ENCODE measurements at regions of chr9 and their contacts with region 1.

Region 1: GRCh38 chr9:126398403-126399058 is 71.9 kb downstream of the MVB12B start:
- DNase-seq: peak; percentile 39 to 85 (median 68)
- ATAC-seq: no peak
- H3K4me3 ChIP-seq: no peak overlapping the region
- H3K4me3 Mint-ChIP-seq: peak overlapping the region; percentile 48
- H3K27ac ChIP-seq: no peak overlapping the region
- H3K27ac Mint-ChIP-seq: peak overlapping the region; percentile 85
- H3K4me1 ChIP-seq: peaks cover 41% of the 10 kb centered on the region
- H3K4me1 Mint-ChIP-seq: peaks cover 58% of the 10 kb centered on the region
- H3K27me3 ChIP-seq: no peaks in the 10 kb centered on the region
- H3K27me3 Mint-ChIP-seq: no peaks in the 10 kb centered on the region
- CTCF ChIP-seq: peak; percentile 96

Region 2: GRCh38 chr9:125407974-125408900 is 990.3 kb before region 1 on chr9:
- CTCF ChIA-PET with region 1: no interaction called
- POLR2A ChIA-PET with region 1: no interaction called
- intact Hi-C with region 1: loop called in 1 of 2 experiments (anchors 5 kb)
- DNase-seq: peak; percentile 50 to 85 (median 72)
- ATAC-seq: peak; percentile 85
- H3K4me3 ChIP-seq: peak overlapping the region; percentile 31
- H3K4me3 Mint-ChIP-seq: peak overlapping the region; percentile 80
- H3K27ac ChIP-seq: no peak overlapping the region
- H3K27ac Mint-ChIP-seq: no peak overlapping the region
- H3K4me1 ChIP-seq: peaks cover 14% of the 10 kb centered on the region
- H3K4me1 Mint-ChIP-seq: peaks cover 8% of the 10 kb centered on the region
- H3K27me3 ChIP-seq: peaks cover 7 to 8% of the 10 kb centered on the region in 2 experiments
- H3K27me3 Mint-ChIP-seq: peaks cover 44% of the 10 kb centered on the region
- CTCF ChIP-seq: peak; percentile 90

Region 3: DNA sequence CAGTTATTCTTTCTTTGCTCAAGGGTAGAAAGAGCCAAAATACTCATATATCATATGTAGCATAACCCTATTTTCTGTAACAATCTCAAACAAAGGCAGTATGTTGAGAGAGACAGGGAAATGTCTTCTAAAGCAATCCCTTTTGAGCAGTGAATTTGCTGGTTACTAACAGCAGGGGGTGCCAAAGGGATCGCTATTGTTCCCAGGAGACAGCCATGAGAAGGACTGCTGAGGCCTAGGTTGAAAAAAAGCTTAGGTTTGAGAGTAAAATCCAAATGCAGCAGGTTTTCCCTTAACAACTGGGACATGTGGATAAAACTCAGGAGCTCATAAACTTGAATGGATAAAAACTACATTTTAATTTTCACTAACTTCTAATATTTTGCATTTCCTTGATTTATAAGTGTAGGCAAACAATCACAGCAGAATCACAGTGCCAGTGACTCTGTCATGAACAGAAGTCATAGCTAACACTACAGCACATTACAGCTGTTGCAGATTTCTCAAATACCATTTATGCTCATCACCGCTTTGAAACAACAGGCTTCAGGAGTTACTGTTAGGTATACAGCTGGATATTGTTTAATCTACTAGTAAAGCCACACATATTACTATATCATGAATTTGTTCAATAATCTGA is 840.0 kb before region 1 on chr9:
- CTCF ChIA-PET with region 1: no interaction called
- POLR2A ChIA-PET with region 1: no interaction called
- intact Hi-C with region 1: loop called in 1 of 2 experiments (anchors 5 kb)
- DNase-seq: peak in 13 of 14 experiments; percentile 10 to 76 (median 30)
- ATAC-seq: peak; percentile 70
- H3K4me3 ChIP-seq: no peak overlapping the region
- H3K4me3 Mint-ChIP-seq: no peak overlapping the region
- H3K27ac ChIP-seq: no peak overlapping the region
- H3K27ac Mint-ChIP-seq: no peak overlapping the region
- H3K4me1 ChIP-seq: no peaks in the 10 kb centered on the region
- H3K4me1 Mint-ChIP-seq: peaks cover 11% of the 10 kb centered on the region
- H3K27me3 ChIP-seq: no peaks in the 10 kb centered on the region
- H3K27me3 Mint-ChIP-seq: no peaks in the 10 kb centered on the region
- CTCF ChIP-seq: peak; percentile 68

Region 4: GRCh38 chr9:126301985-126302603 is 96.4 kb before region 1 on chr9:
- CTCF ChIA-PET with region 1: interaction called, 11 read pairs
- POLR2A ChIA-PET with region 1: interaction called, 3 read pairs
- intact Hi-C with region 1: loop called (anchors 1 kb)
- DNase-seq: peak; percentile 30 to 78 (median 42)
- ATAC-seq: peak; percentile 97
- H3K4me3 ChIP-seq: no peak overlapping the region
- H3K4me3 Mint-ChIP-seq: no peak overlapping the region
- H3K27ac ChIP-seq: no peak overlapping the region
- H3K27ac Mint-ChIP-seq: no peak overlapping the region
- H3K4me1 ChIP-seq: no peaks in the 10 kb centered on the region
- H3K4me1 Mint-ChIP-seq: peaks cover 5% of the 10 kb centered on the region
- H3K27me3 ChIP-seq: no peaks in the 10 kb centered on the region
- H3K27me3 Mint-ChIP-seq: no peaks in the 10 kb centered on the region
- CTCF ChIP-seq: peak; percentile 62

Region 5: DNA sequence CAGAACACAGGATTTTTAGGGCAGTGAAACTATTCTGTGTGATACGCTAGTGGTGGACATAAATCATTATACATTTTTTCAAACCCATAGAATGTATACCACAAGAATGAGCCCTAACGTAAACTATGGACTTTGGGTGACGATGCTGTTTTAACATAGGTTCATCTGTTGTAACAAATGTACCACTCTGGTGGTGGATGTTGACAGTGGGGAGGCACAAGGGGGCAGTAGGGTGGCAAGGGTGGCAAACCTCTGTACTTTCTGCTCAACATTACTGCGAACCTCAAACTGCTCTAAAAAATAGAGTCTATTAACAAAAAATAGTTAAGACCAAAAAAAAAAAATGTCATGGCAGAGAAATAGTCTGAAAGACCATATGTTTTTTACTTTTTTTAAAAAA is 81.0 kb before region 1 on chr9:
- CTCF ChIA-PET with region 1: interaction called, 6 read pairs
- POLR2A ChIA-PET with region 1: no interaction called
- intact Hi-C with region 1: loop called (anchors 1 to 5 kb)
- DNase-seq: peak; percentile 11 to 69 (median 44)
- ATAC-seq: peak; percentile 88
- H3K4me3 ChIP-seq: no peak overlapping the region
- H3K4me3 Mint-ChIP-seq: no peak overlapping the region
- H3K27ac ChIP-seq: no peak overlapping the region
- H3K27ac Mint-ChIP-seq: no peak overlapping the region
- H3K4me1 ChIP-seq: peaks cover 4% of the 10 kb centered on the region
- H3K4me1 Mint-ChIP-seq: peaks cover 16% of the 10 kb centered on the region
- H3K27me3 ChIP-seq: no peaks in the 10 kb centered on the region
- H3K27me3 Mint-ChIP-seq: no peaks in the 10 kb centered on the region
- CTCF ChIP-seq: peak; percentile 66

Region 6: DNA sequence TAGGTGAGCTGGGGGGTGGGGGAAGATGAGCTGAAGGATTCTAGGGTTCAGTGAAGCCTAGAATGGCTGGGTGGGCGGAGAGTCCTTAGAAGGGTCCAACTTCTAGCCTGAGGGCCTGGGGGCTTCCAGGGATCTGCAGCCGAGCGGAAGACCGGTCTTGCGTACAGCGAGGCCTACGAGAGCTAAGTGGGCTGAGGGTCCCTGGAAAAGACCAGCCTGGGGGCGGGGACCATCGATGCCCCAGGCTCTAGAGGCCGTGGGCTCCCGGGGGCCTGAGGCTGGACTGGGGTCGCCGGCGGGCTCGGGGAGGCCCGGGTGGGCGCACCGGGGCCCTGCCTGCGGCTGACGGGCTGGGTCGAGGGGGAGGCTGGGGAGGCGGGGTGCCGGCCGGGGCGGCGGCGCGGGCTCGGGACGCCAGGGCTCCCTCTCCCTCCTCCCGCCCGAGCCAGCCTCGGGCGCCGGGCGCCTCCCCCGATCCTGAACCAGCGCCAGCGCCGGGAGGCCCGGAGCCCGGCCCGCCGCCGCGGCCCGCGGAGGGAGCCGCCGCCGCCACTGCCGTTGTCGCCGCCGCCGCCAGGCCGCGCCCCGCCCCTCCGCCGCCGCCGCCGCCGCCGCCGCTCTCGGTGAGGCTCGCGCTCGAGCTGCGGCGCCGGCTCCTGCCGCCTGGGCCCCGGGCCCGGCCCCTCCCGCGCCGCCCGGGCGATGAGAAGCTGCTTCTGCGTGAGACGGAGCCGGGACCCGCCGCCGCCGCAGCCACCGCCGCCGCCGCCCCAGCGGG is 72.1 kb before region 1 on chr9 and contains the start of gene MVB12B:
- CTCF ChIA-PET with region 1: no interaction called
- POLR2A ChIA-PET with region 1: interaction called, 4 read pairs
- intact Hi-C with region 1: loop called (anchors 2 kb)
- DNase-seq: peak; percentile 17 to 86 (median 52)
- ATAC-seq: peak; percentile 82
- H3K4me3 ChIP-seq: peak within 1 kb of the TSS; percentile 62
- H3K4me3 Mint-ChIP-seq: peak within 1 kb of the TSS; percentile 92
- H3K27ac ChIP-seq: no peak within 1 kb of the TSS
- H3K27ac Mint-ChIP-seq: peak within 1 kb of the TSS; percentile 87
- H3K4me1 ChIP-seq: peaks cover 37% of the 10 kb centered on the region
- H3K4me1 Mint-ChIP-seq: peaks cover 47% of the 10 kb centered on the region
- H3K27me3 ChIP-seq: no peaks in the 10 kb centered on the region
- H3K27me3 Mint-ChIP-seq: no peaks in the 10 kb centered on the region
- CTCF ChIP-seq: no peak
- total RNA-seq, gene MVB12B: 14.3 to 15.3 TPM

Region 7: GRCh38 chr9:126440940-126441339 is 42.4 kb after region 1 on chr9:
- CTCF ChIA-PET with region 1: no interaction called
- POLR2A ChIA-PET with region 1: no interaction called
- intact Hi-C with region 1: no loop called
- DNase-seq: no peak
- ATAC-seq: no peak
- H3K4me3 ChIP-seq: no peak overlapping the region
- H3K4me3 Mint-ChIP-seq: no peak overlapping the region
- H3K27ac ChIP-seq: no peak overlapping the region
- H3K27ac Mint-ChIP-seq: no peak overlapping the region
- H3K4me1 ChIP-seq: no peaks in the 10 kb centered on the region
- H3K4me1 Mint-ChIP-seq: peaks cover 16% of the 10 kb centered on the region
- H3K27me3 ChIP-seq: no peaks in the 10 kb centered on the region
- H3K27me3 Mint-ChIP-seq: no peaks in the 10 kb centered on the region
- CTCF ChIP-seq: no peak

Region 8: GRCh38 chr9:126471084-126471624 is 72.6 kb after region 1 on chr9:
- CTCF ChIA-PET with region 1: interaction called, 3 read pairs
- POLR2A ChIA-PET with region 1: interaction called, 19 read pairs
- intact Hi-C with region 1: loop called in 1 of 2 experiments (anchors 5 kb)
- DNase-seq: peak; percentile 53 to 92 (median 62)
- ATAC-seq: peak; percentile 73
- H3K4me3 ChIP-seq: peak overlapping the region; percentile 31
- H3K4me3 Mint-ChIP-seq: peak overlapping the region; percentile 81
- H3K27ac ChIP-seq: peak overlapping the region; percentile 42 to 56
- H3K27ac Mint-ChIP-seq: peak overlapping the region; percentile 95
- H3K4me1 ChIP-seq: peaks cover 82% of the 10 kb centered on the region
- H3K4me1 Mint-ChIP-seq: peaks cover 80% of the 10 kb centered on the region
- H3K27me3 ChIP-seq: no peaks in the 10 kb centered on the region
- H3K27me3 Mint-ChIP-seq: no peaks in the 10 kb centered on the region
- CTCF ChIP-seq: no peak

Region 9: DNA sequence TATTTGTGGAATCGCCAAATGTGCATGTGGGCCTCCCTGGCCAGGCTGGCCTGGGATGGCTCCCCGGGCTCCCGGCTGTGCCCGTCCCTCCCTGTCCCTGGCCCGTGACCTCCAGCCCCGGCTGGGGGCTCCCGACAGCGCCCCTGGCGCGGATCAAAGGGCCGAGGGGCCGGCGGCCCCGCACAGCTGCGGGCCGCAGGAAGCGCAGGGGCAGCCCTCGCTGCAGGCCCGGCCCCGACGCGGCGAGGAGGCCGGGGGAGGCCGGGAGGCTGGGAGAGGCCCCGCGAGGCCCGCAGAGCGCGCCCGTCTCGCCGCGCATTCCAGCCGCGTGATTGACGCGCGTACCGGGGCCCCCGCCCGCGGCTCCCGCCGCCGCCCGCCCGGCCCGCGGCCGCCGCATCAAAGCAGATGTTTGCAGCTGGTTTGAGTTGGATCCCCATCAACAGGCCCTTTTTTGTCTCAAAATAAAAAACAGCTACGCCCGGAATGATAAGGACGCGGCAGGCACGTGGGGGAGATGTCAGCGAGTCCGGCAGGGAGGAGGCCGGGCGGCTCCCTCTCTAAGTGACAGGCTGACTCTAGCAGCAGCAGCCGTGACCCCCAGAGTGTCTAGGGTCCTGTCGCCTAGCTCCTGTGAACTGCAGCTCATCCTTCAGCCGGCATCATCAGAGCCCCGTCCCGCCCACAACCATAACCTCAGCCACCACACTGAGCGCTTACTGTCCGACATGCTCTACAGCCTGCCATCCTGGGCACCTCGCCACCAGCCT is 284.6 kb after region 1 on chr9:
- CTCF ChIA-PET with region 1: no interaction called
- POLR2A ChIA-PET with region 1: no interaction called
- intact Hi-C with region 1: no loop called
- DNase-seq: no peak
- ATAC-seq: no peak
- H3K4me3 ChIP-seq: no peak overlapping the region
- H3K4me3 Mint-ChIP-seq: no peak overlapping the region
- H3K27ac ChIP-seq: no peak overlapping the region
- H3K27ac Mint-ChIP-seq: no peak overlapping the region
- H3K4me1 ChIP-seq: peaks cover 5% of the 10 kb centered on the region
- H3K4me1 Mint-ChIP-seq: no peaks in the 10 kb centered on the region
- H3K27me3 ChIP-seq: peaks cover 45 to 86% of the 10 kb centered on the region in 2 experiments
- H3K27me3 Mint-ChIP-seq: peaks cover 83% of the 10 kb centered on the region
- CTCF ChIP-seq: no peak